BJ (cell line): ENCODE measurements at regions of chr14 and their contacts with region 1.

Region 1: DNA sequence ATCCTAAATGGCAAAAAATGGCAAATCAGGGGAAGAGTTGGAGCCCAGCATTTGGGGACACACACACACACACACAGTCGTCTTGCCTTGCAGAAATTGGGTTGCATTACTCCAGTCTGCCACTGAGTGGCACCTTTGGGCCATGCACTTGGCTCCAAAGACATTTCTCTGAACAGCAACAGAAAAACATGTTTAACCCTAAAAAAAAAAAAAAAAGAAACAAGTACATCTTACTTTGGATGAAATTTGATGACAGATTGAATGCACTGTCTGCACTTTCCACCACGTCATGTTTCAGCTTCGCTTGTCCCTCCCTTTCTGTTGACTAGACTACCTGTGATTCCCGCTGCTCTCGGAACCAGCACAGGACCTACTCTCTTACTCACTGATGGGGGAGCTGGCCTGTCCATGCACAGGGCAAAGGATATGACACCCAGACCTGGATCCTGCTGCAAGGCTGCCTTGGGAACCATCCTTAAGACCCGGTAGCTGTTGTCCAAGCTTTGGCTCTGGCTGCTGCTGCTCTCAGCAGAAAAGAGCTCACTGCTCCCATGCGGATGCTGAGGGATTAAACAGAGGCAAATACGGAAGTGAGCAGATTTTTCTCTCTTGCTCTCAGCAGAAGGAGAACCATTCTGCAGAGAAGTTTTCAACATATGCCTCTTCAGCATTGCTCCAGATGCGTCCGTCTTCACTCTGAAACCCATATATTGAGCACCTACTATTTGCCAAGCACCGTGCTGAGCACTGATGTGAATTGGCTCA is 376.8 kb downstream of the DPF3 start:
- DNase-seq: peak; percentile 23
- H3K4me3 ChIP-seq: no peak overlapping the region
- H3K27me3 ChIP-seq: peaks cover 1% of the 10 kb centered on the region; the same call in 1 of the 2 replicates
- CTCF ChIP-seq: peak; percentile 88

Region 2: DNA sequence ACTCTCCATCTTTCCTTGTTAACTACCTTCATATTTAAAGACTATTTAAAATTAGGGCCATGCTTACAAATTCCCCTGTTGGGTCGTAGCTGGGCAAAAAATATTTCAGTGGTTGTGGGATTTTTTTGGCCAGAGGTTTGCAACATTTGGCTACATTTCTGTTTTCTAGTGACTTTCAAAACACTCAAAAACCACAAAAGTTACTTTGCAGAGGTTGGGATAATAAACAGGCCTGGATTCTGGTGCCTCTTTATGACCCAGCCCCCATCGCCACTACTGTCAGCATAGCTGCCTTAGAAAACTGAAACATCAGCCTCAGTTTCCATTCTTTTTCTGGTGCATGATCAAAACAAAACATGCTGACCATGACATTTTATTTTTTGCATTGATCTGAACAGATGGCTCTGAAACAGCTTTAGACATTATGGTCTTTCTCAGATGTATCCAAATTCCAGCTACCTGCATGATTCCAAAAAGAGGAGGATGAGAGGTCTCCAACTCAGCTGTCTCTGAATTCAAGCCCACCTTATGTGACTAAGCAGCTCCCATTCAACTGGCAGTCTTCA is 371.6 kb after region 1 on chr14:
- CTCF ChIA-PET with region 1: interaction called, 13 read pairs
- POLR2A ChIA-PET with region 1: no interaction called
- DNase-seq: no peak
- H3K4me3 ChIP-seq: no peak overlapping the region
- H3K27me3 ChIP-seq: no peaks in the 10 kb centered on the region
- CTCF ChIP-seq: no peak

Region 3: GRCh38 chr14:72904840-72905561 is 387.9 kb after region 1 on chr14:
- CTCF ChIA-PET with region 1: interaction called, 215 read pairs
- POLR2A ChIA-PET with region 1: interaction called, 3 read pairs
- DNase-seq: no peak
- H3K4me3 ChIP-seq: no peak overlapping the region
- H3K27me3 ChIP-seq: no peaks in the 10 kb centered on the region
- CTCF ChIP-seq: peak; percentile 88

Region 4: GRCh38 chr14:72942782-72943333 is 425.7 kb after region 1 on chr14:
- CTCF ChIA-PET with region 1: interaction called, 292 read pairs
- POLR2A ChIA-PET with region 1: no interaction called
- DNase-seq: no peak
- H3K4me3 ChIP-seq: no peak overlapping the region
- H3K27me3 ChIP-seq: no peaks in the 10 kb centered on the region
- CTCF ChIP-seq: no peak

Region 5: DNA sequence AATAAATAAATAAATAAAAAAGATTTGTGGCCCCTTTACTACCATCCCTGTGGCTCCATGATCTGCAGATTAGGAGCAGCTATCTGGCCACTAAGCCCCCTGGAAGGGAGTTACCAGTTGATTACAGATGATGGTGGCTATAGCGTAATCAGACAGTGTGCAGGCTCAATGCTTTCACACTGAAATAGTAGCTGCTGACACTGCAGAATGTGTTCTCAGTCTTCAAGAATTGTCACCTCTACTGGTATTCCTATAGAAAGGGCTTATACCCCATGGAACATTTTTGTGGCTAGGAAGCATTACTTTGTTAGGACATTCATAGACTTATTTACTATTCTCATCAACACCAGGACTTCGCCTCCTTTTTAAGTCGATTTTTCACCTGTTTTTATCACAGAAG is 440.1 kb after region 1 on chr14:
- CTCF ChIA-PET with region 1: interaction called, 292 read pairs
- POLR2A ChIA-PET with region 1: no interaction called
- DNase-seq: no peak
- H3K4me3 ChIP-seq: no peak overlapping the region
- H3K27me3 ChIP-seq: no peaks in the 10 kb centered on the region
- CTCF ChIP-seq: no peak

Region 6: GRCh38 chr14:72975776-72976175 is 458.7 kb after region 1 on chr14:
- CTCF ChIA-PET with region 1: interaction called, 14 read pairs
- POLR2A ChIA-PET with region 1: no interaction called
- DNase-seq: no peak
- H3K4me3 ChIP-seq: no peak overlapping the region
- H3K27me3 ChIP-seq: no peaks in the 10 kb centered on the region
- CTCF ChIP-seq: 0 out of 2 replicates have a peak, but pooled peaks have one; percentile 7